ENCODE measurements at regions of chr2 and their contacts with region 1.

Region 1: GRCh38 chr2:149375801-149376361 is 45.5 kb downstream of the LYPD6 start:
- DNase-seq: no peak
- H3K4me3 ChIP-seq: no peak overlapping the region
- H3K27ac ChIP-seq: no peak overlapping the region
- H3K4me1 ChIP-seq: peaks cover 0 to 7% (median 0%) of the 10 kb centered on the region in 4 donors
- H3K27me3 ChIP-seq: no peaks in the 10 kb centered on the region
- CTCF ChIP-seq: no peak
- EP300 ChIP-seq: no peak
- POLR2A ChIP-seq: no peak

Region 2: GRCh38 chr2:147904044-147904443 is 1471.8 kb before region 1 on chr2:
- intact Hi-C with region 1: no loop called
- DNase-seq: no peak
- H3K4me3 ChIP-seq: no peak overlapping the region
- H3K27ac ChIP-seq: no peak overlapping the region
- H3K4me1 ChIP-seq: no peaks in the 10 kb centered on the region
- H3K27me3 ChIP-seq: no peaks in the 10 kb centered on the region
- CTCF ChIP-seq: no peak
- EP300 ChIP-seq: no peak
- POLR2A ChIP-seq: no peak

Region 3: GRCh38 chr2:149410701-149411484 is 35.0 kb after region 1 on chr2:
- intact Hi-C with region 1: loop called (anchors 5 kb)
- DNase-seq: no peak
- H3K4me3 ChIP-seq: no peak overlapping the region
- H3K27ac ChIP-seq: no peak overlapping the region
- H3K4me1 ChIP-seq: no peaks in the 10 kb centered on the region
- H3K27me3 ChIP-seq: no peaks in the 10 kb centered on the region
- CTCF ChIP-seq: no peak
- EP300 ChIP-seq: no peak
- POLR2A ChIP-seq: no peak

Measured in sigmoid colon (tissue), 7 donors.